Activated T-helper 1 cell treated with anti-CD3 and anti-CD28 coated beads, Interleukin-12 subunit alpha, Interleukin-12 subunit beta, Interleukin-2, Interleukin-4 antibody, amounts not matched to agents 30 ng/mL and 10 ng/mL and 1 ng/mL, durations not matched to agents 14 hours and 24 hours and 36 hours (primary cell): ENCODE measurements at regions of chr20 and their contacts with region 1.

Region 1: GRCh38 chr20:18496740-18497592 is at the start of gene RBBP9:
- DNase-seq: peak; percentile 70
- H3K4me3 Mint-ChIP-seq: peak within 1 kb of the TSS; percentile 91
- H3K27ac Mint-ChIP-seq: peak within 1 kb of the TSS; percentile 64
- H3K4me1 Mint-ChIP-seq: peaks cover 16% of the 10 kb centered on the region
- H3K27me3 Mint-ChIP-seq: no peaks in the 10 kb centered on the region
- total RNA-seq, gene RBBP9: 18.6 and 18.7 TPM in 2 replicates

Region 2: DNA sequence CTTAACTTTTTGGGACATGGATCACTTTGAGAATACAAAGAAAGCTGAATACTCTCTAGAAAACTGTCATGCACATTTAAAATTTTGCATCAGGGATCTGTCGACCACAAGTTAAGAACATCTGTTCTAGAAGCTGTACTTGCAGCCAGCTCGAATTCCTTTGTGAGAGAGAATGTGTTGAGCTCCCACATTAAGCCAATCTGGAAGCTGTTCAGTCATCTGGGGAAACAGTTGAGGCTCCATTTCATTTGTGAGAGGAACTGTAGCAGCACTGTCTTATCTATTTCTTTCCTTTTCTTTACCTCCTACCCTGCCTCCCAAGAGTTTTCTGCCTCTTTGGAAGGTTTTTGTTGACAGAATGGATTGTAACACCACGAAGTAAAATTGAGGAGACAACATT is 308.5 kb before region 1 on chr20:
- intact Hi-C with region 1: no loop called
- DNase-seq: no peak
- H3K4me3 Mint-ChIP-seq: no peak overlapping the region
- H3K27ac Mint-ChIP-seq: no peak overlapping the region
- H3K4me1 Mint-ChIP-seq: peaks cover 9% of the 10 kb centered on the region
- H3K27me3 Mint-ChIP-seq: no peaks in the 10 kb centered on the region

Region 3: GRCh38 chr20:18587665-18588573 is 91.0 kb after region 1 on chr20 and contains the start of gene DTD1:
- intact Hi-C with region 1: loop called (anchors 2 kb)
- DNase-seq: peak; percentile 80
- H3K4me3 Mint-ChIP-seq: peak within 1 kb of the TSS; percentile 93
- H3K27ac Mint-ChIP-seq: peak within 1 kb of the TSS; percentile 82
- H3K4me1 Mint-ChIP-seq: peaks cover 25% of the 10 kb centered on the region
- H3K27me3 Mint-ChIP-seq: peaks cover 10% of the 10 kb centered on the region
- total RNA-seq, gene DTD1: 37.7 and 44.0 TPM in 2 replicates